Panc1 (cell line): ENCODE measurements at regions of chr3 and their contacts with region 1.

Region 1: DNA sequence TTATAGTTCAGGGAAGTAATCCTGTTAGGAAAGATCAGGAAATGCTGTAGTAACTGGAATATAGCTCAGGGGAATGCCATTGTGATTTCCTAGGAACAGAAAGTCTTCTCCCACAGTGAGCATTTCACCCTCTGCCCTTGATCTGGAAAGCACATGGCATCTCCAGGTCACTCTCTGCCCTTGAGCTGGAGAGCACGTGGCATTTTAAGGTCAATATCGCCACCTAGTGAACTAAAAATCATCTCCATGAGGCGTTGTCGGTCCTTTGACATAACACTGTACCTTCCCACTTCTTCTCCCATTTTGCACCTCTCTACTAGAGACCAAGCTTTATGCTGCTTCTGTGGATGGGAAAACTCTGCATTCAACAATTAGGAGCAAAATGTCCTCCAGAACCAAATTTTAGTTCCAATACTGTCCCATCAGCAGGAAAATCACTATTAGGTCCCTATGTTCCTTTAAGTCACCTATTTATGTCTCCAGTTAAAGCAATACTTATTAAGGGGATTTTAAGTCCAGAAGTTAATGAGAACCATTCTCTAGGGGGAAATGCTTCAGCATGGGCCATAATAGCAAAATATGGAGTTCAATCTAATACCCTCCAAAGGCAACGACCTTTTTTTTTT is 54.7 kb upstream of the GK5 start:
- DNase-seq: peak; percentile 57
- ATAC-seq: peak; percentile 97
- H3K4me3 ChIP-seq: no peak overlapping the region
- H3K27ac ChIP-seq: no peak overlapping the region
- H3K4me1 ChIP-seq: no peaks in the 10 kb centered on the region
- H3K27me3 ChIP-seq: no peaks in the 10 kb centered on the region
- CTCF ChIP-seq: peak; percentile 78

Region 2: GRCh38 chr3:141625506-141625905 is 654.6 kb before region 1 on chr3:
- CTCF ChIA-PET with region 1: no interaction called
- POLR2A ChIA-PET with region 1: no interaction called
- in situ Hi-C with region 1: no loop called
- intact Hi-C with region 1: no loop called
- DNase-seq: no peak
- ATAC-seq: peak; percentile 49; the same call in 1 of the 2 replicates
- H3K4me3 ChIP-seq: no peak overlapping the region
- H3K27ac ChIP-seq: no peak overlapping the region
- H3K4me1 ChIP-seq: no peaks in the 10 kb centered on the region
- H3K27me3 ChIP-seq: no peaks in the 10 kb centered on the region
- CTCF ChIP-seq: no peak

Region 3: GRCh38 chr3:142129516-142130171 is 150.4 kb before region 1 on chr3:
- CTCF ChIA-PET with region 1: interaction called, 8 read pairs
- POLR2A ChIA-PET with region 1: no interaction called
- in situ Hi-C with region 1: no loop called
- intact Hi-C with region 1: loop called (anchors 1 kb)
- DNase-seq: no peak
- ATAC-seq: no peak
- H3K4me3 ChIP-seq: no peak overlapping the region
- H3K27ac ChIP-seq: no peak overlapping the region
- H3K4me1 ChIP-seq: no peaks in the 10 kb centered on the region
- H3K27me3 ChIP-seq: no peaks in the 10 kb centered on the region
- CTCF ChIP-seq: peak; percentile 34; the same call in 1 of the 2 replicates

Region 4: DNA sequence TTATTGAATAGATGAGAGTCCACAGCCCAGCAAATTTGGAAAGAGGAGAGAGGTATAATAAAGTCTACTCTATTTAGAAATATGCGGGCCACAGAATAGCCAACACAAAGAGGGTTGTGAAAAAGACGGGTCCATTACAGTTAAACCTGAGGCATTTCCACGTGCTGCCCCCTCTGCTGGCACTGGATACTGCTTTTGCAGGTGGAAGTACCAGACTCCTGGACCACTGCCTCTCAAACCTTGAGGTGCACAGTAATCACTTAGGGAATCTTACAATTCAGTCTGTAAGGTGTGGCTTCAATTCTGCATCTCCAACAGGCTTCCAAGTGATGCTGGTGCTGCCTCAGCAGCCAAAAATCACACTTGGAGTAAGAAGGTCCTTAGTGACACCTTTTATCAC is 127.7 kb before region 1 on chr3:
- CTCF ChIA-PET with region 1: no interaction called
- POLR2A ChIA-PET with region 1: interaction called, 10 read pairs
- in situ Hi-C with region 1: no loop called
- intact Hi-C with region 1: no loop called
- DNase-seq: no peak
- ATAC-seq: no peak
- H3K4me3 ChIP-seq: no peak overlapping the region
- H3K27ac ChIP-seq: no peak overlapping the region
- H3K4me1 ChIP-seq: peaks cover 16% of the 10 kb centered on the region
- H3K27me3 ChIP-seq: no peaks in the 10 kb centered on the region; the same call in 1 of the 2 replicates
- CTCF ChIP-seq: peak; percentile 61

Region 5: GRCh38 chr3:142180761-142181362 is 99.2 kb before region 1 on chr3:
- CTCF ChIA-PET with region 1: interaction called, 5 read pairs
- POLR2A ChIA-PET with region 1: no interaction called
- in situ Hi-C with region 1: no loop called
- intact Hi-C with region 1: loop called (anchors 2 kb)
- DNase-seq: no peak
- ATAC-seq: peak; percentile 77
- H3K4me3 ChIP-seq: no peak overlapping the region
- H3K27ac ChIP-seq: no peak overlapping the region
- H3K4me1 ChIP-seq: no peaks in the 10 kb centered on the region
- H3K27me3 ChIP-seq: no peaks in the 10 kb centered on the region
- CTCF ChIP-seq: peak; percentile 82

Region 6: DNA sequence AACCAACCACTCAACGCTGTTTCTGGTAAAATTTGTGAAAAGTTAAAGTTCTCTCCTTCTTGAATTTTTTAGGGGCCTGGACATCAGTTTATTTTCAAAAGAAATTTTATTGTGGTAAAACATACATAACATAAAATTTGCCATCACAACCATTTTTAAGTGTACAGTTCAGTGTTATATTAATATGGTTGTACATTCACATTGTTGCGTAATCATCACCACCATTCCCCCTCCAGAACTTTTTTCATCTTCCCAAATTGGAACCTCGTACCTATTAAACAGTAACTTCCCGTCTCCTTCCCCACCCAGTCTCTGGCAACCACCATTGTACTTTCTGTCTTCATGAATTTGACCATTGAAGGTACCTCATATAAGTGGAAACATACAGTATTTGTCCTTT is 190.7 kb after region 1 on chr3:
- CTCF ChIA-PET with region 1: no interaction called
- POLR2A ChIA-PET with region 1: no interaction called
- in situ Hi-C with region 1: no loop called
- intact Hi-C with region 1: no loop called
- DNase-seq: no peak
- ATAC-seq: no peak
- H3K4me3 ChIP-seq: no peak overlapping the region
- H3K27ac ChIP-seq: no peak overlapping the region
- H3K4me1 ChIP-seq: no peaks in the 10 kb centered on the region
- H3K27me3 ChIP-seq: no peaks in the 10 kb centered on the region
- CTCF ChIP-seq: no peak